CD4-positive, alpha-beta T cell (primary cell): ENCODE measurements at regions of chr19 and their contacts with region 1.

Region 1: GRCh38 chr19:45692187-45693105 is at the start of gene QPCTL:
- DNase-seq: peak; percentile 92 to 99 (median 94)
- ATAC-seq: peak; percentile 87
- H3K4me3 ChIP-seq: peak within 1 kb of the TSS; percentile 85
- H3K4me3 Mint-ChIP-seq: peak within 1 kb of the TSS; percentile 96
- H3K27ac ChIP-seq: peak within 1 kb of the TSS; percentile 86 to 93
- H3K27ac Mint-ChIP-seq: peak within 1 kb of the TSS; percentile 95
- H3K4me1 ChIP-seq: peaks cover 39% of the 10 kb centered on the region
- H3K4me1 Mint-ChIP-seq: peaks cover 33% of the 10 kb centered on the region
- H3K27me3 ChIP-seq: no peaks in the 10 kb centered on the region
- H3K27me3 Mint-ChIP-seq: no peaks in the 10 kb centered on the region
- CTCF ChIP-seq: no peak
- total RNA-seq, gene QPCTL: 3.7 to 5.0 TPM

Region 2: GRCh38 chr19:45294291-45295029 is 398.0 kb before region 1 on chr19:
- CTCF ChIA-PET with region 1: no interaction called
- POLR2A ChIA-PET with region 1: no interaction called
- intact Hi-C with region 1: no loop called
- DNase-seq: no peak
- ATAC-seq: no peak
- H3K4me3 ChIP-seq: no peak overlapping the region
- H3K4me3 Mint-ChIP-seq: no peak overlapping the region
- H3K27ac ChIP-seq: no peak overlapping the region
- H3K27ac Mint-ChIP-seq: no peak overlapping the region
- H3K4me1 ChIP-seq: no peaks in the 10 kb centered on the region
- H3K4me1 Mint-ChIP-seq: no peaks in the 10 kb centered on the region
- H3K27me3 ChIP-seq: no peaks in the 10 kb centered on the region
- H3K27me3 Mint-ChIP-seq: no peaks in the 10 kb centered on the region
- CTCF ChIP-seq: no peak

Region 3: GRCh38 chr19:45523642-45524256 is 168.7 kb before region 1 on chr19:
- CTCF ChIA-PET with region 1: interaction called, 3 read pairs
- POLR2A ChIA-PET with region 1: no interaction called
- intact Hi-C with region 1: loop called in 1 of 2 experiments (anchors 5 kb)
- DNase-seq: peak; percentile 54 to 92 (median 66)
- ATAC-seq: peak; percentile 99
- H3K4me3 ChIP-seq: no peak overlapping the region
- H3K4me3 Mint-ChIP-seq: no peak overlapping the region
- H3K27ac ChIP-seq: no peak overlapping the region
- H3K27ac Mint-ChIP-seq: peak overlapping the region; percentile 53
- H3K4me1 ChIP-seq: peaks cover 11% of the 10 kb centered on the region
- H3K4me1 Mint-ChIP-seq: peaks cover 19% of the 10 kb centered on the region
- H3K27me3 ChIP-seq: no peaks in the 10 kb centered on the region
- H3K27me3 Mint-ChIP-seq: no peaks in the 10 kb centered on the region
- CTCF ChIP-seq: peak; percentile 76

Region 4: GRCh38 chr19:45584332-45585157 is 107.9 kb before region 1 on chr19 and contains the start of gene OPA3:
- CTCF ChIA-PET with region 1: interaction called, 4 read pairs
- POLR2A ChIA-PET with region 1: interaction called, 4 read pairs
- intact Hi-C with region 1: loop called (anchors 1 to 10 kb)
- DNase-seq: peak; percentile 97 to 100 (median 99)
- ATAC-seq: peak; percentile 85
- H3K4me3 ChIP-seq: peak within 1 kb of the TSS; percentile 95
- H3K4me3 Mint-ChIP-seq: peak within 1 kb of the TSS; percentile 88
- H3K27ac ChIP-seq: peak within 1 kb of the TSS; percentile 98 to 99
- H3K27ac Mint-ChIP-seq: peak within 1 kb of the TSS; percentile 98
- H3K4me1 ChIP-seq: peaks cover 21% of the 10 kb centered on the region
- H3K4me1 Mint-ChIP-seq: peaks cover 26% of the 10 kb centered on the region
- H3K27me3 ChIP-seq: peaks cover 0 to under 1% of the 10 kb centered on the region in 2 experiments
- H3K27me3 Mint-ChIP-seq: peaks cover 12% of the 10 kb centered on the region
- CTCF ChIP-seq: no peak
- total RNA-seq, gene OPA3: 3.1 to 3.2 TPM

Region 5: GRCh38 chr19:45681391-45682015 is 10.9 kb before region 1 on chr19:
- CTCF ChIA-PET with region 1: interaction called, 29 read pairs
- POLR2A ChIA-PET with region 1: interaction called, 33 read pairs
- intact Hi-C with region 1: loop called in 1 of 2 experiments (anchors 2 kb)
- DNase-seq: peak; percentile 69 to 92 (median 84)
- ATAC-seq: peak; percentile 77
- H3K4me3 ChIP-seq: peak overlapping the region; percentile 47
- H3K4me3 Mint-ChIP-seq: peak overlapping the region; percentile 82
- H3K27ac ChIP-seq: no peak overlapping the region
- H3K27ac Mint-ChIP-seq: no peak overlapping the region
- H3K4me1 ChIP-seq: peaks cover 29% of the 10 kb centered on the region
- H3K4me1 Mint-ChIP-seq: peaks cover 21% of the 10 kb centered on the region
- H3K27me3 ChIP-seq: no peaks in the 10 kb centered on the region
- H3K27me3 Mint-ChIP-seq: no peaks in the 10 kb centered on the region
- CTCF ChIP-seq: peak; percentile 97

Region 6: DNA sequence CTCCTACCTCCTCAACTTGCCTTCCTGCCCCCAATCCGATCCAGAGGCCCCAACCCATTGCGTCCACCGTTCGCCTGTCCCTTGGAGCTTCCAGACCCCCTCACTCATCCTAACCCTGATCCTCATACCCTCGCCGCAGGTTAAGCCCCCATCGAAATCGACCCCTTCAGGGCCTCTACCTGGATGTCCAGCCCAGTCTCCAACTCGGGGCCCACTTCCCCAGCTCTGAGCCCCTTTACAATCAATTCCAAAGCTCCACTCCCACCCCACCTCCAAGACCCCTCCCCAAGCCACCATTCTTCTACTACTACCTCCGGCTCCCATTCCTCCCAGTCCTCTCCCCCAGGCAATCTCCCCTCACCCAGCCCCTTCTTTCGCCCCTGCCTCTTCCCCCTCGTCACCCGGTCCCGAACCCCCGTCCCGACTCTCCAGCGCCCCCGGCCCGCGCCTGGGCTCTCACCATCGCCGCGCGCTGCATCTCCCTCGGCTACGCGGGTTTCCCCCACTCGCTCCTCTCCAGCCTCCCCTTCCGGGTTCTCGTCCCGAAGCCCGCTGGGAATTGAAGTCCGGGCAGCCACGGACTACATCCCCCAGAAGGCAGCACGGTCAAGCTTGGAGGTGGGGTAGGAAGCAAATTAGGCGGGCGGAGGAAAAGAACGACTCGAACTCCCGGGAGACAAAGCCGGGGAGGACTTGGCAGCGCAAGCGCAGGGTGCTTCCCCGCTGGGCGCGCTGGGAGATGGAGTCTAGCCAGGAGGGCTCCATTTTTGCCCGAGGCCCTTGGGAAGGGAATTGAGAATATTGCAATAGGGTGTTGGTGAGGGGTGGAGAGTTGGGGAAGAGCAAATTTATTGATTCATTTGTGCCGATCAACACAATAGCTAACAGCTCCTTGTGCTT is 38.2 kb after region 1 on chr19 and contains the start of gene FBXO46:
- CTCF ChIA-PET with region 1: interaction called, 12 read pairs
- POLR2A ChIA-PET with region 1: interaction called, 9 read pairs
- intact Hi-C with region 1: loop called in 1 of 2 experiments (anchors 1 kb)
- DNase-seq: peak; percentile 83 to 97 (median 91)
- ATAC-seq: peak; percentile 99
- H3K4me3 ChIP-seq: peak within 1 kb of the TSS; percentile 77
- H3K4me3 Mint-ChIP-seq: peak within 1 kb of the TSS; percentile 97
- H3K27ac ChIP-seq: peak within 1 kb of the TSS; percentile 31 to 49
- H3K27ac Mint-ChIP-seq: peak within 1 kb of the TSS; percentile 83
- H3K4me1 ChIP-seq: peaks cover 37% of the 10 kb centered on the region
- H3K4me1 Mint-ChIP-seq: peaks cover 33% of the 10 kb centered on the region
- H3K27me3 ChIP-seq: no peaks in the 10 kb centered on the region
- H3K27me3 Mint-ChIP-seq: no peaks in the 10 kb centered on the region
- CTCF ChIP-seq: no peak
- total RNA-seq, gene FBXO46: 17.2 to 17.5 TPM

Region 7: GRCh38 chr19:45752639-45753038 is 60.2 kb after region 1 on chr19:
- CTCF ChIA-PET with region 1: no interaction called
- POLR2A ChIA-PET with region 1: no interaction called
- intact Hi-C with region 1: no loop called
- DNase-seq: no peak
- ATAC-seq: no peak
- H3K4me3 ChIP-seq: no peak overlapping the region
- H3K4me3 Mint-ChIP-seq: no peak overlapping the region
- H3K27ac ChIP-seq: no peak overlapping the region
- H3K27ac Mint-ChIP-seq: no peak overlapping the region
- H3K4me1 ChIP-seq: no peaks in the 10 kb centered on the region
- H3K4me1 Mint-ChIP-seq: no peaks in the 10 kb centered on the region
- H3K27me3 ChIP-seq: no peaks in the 10 kb centered on the region
- H3K27me3 Mint-ChIP-seq: peaks cover under 1% of the 10 kb centered on the region
- CTCF ChIP-seq: no peak